ENCODE measurements at regions of chr4 and their contacts with region 1.

Region 1: GRCh38 chr4:47598320-47598719 is 113.2 kb downstream of the ATP10D start:
- DNase-seq: no peak

Region 2: GRCh38 chr4:47340914-47341313 is 257.4 kb before region 1 on chr4:
- intact Hi-C with region 1: loop called in 1 of 2 experiments (anchors 5 kb)
- DNase-seq: no peak

Measured in posterior vena cava (tissue), 2 donors.